ENCODE measurements at regions of chr22 and their contacts with region 1.

Region 1: DNA sequence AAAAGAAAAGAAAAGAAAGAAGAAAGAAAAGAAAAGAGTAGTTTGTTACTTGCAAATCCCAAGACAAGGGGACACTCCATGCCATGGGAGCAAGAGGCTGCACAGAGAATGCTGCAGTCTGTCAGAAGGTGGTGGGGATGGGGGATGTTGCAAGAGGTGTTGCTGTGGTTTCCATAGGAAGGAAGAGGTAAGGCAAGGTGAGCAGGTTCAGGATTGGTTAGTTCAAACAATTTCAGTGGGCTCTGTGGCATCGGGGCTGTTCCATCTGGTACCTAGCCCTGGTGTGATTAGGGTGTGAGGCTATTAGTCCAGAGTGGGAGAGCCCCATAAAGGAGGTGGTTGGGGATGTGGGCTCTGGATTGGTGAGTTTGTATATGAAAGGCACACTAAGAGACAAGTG is 172.7 kb downstream of the BCR start:
- DNase-seq: no peak
- H3K4me3 ChIP-seq: no peak overlapping the region
- H3K4me3 Mint-ChIP-seq: no peak overlapping the region
- H3K27ac ChIP-seq: no peak overlapping the region
- H3K27ac Mint-ChIP-seq: no peak overlapping the region
- H3K4me1 ChIP-seq: no peaks in the 10 kb centered on the region
- H3K4me1 Mint-ChIP-seq: no peaks in the 10 kb centered on the region
- H3K27me3 ChIP-seq: no peaks in the 10 kb centered on the region
- H3K27me3 Mint-ChIP-seq: peaks cover 2 to 4% (median 4%) of the 10 kb centered on the region in 3 donors
- CTCF ChIP-seq: no peak

Region 2: GRCh38 chr22:24683671-24684070 is 1330.7 kb after region 1 on chr22:
- intact Hi-C with region 1: loop called in 1 of 2 experiments (anchors 10 kb)
- DNase-seq: no peak
- H3K4me3 ChIP-seq: no peak overlapping the region
- H3K4me3 Mint-ChIP-seq: no peak overlapping the region
- H3K27ac ChIP-seq: no peak overlapping the region
- H3K27ac Mint-ChIP-seq: no peak overlapping the region
- H3K4me1 ChIP-seq: no peaks in the 10 kb centered on the region
- H3K4me1 Mint-ChIP-seq: peaks cover 6% of the 10 kb centered on the region
- H3K27me3 ChIP-seq: peaks cover 29 to 44% of the 10 kb centered on the region in 2 donors
- H3K27me3 Mint-ChIP-seq: peaks cover 38 to 67% (median 52%) of the 10 kb centered on the region in 3 donors
- CTCF ChIP-seq: no peak

Measured in CD14-positive monocyte (primary cell).